ENCODE measurements at regions of chr1 and their contacts with region 1.

Region 1: DNA sequence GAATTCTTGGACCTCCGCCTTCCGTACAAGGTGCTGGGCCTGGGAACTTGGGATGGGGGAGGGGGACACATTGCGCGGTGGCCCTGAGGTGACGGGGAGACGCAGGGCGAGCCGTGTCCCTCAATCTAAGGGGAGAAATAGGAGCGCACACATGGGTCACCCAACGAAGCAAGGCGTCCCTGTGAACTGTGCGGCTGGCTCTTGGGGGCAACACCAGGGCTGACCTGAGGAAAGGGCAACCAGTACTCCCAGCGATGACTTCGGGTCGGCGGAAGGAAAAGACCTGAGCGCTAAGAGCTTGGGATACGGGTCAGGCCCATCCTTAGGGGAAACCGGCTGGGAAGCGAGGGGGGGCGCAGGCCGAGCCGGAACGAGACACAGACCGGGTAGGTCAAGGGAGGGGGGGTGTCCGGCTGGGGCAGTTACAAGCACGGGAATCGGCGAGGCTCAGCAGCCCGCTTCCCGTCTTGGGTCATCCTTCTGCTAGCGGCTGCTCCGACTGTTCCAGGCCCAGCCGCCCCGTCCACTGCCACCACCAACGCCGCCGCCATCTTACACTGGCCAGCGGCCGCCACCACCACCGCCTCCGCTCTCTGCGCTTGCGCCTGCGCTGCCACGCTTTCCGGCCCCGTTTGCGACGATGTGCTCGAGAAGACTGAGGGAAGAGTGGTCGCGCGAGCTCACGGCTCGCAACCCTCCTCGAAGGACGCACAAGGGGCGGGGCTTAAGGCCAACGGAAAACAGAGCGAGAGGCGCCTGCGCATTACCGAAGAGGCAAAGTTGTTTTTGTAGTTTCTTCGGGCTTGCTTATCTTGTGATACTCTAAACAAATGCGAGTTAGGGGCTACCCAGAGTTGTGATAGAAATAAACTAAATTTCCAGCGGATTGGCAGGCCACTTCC is at the start of gene DCAF8:
- DNase-seq: peak; percentile 99
- ATAC-seq: peak; percentile 88
- H3K4me3 Mint-ChIP-seq: peak within 1 kb of the TSS; percentile 100
- H3K27ac Mint-ChIP-seq: peak within 1 kb of the TSS; percentile 99
- H3K4me1 Mint-ChIP-seq: peaks cover 44% of the 10 kb centered on the region
- H3K27me3 Mint-ChIP-seq: no peaks in the 10 kb centered on the region
- total RNA-seq, gene DCAF8: 116 to 135 TPM

Region 2: DNA sequence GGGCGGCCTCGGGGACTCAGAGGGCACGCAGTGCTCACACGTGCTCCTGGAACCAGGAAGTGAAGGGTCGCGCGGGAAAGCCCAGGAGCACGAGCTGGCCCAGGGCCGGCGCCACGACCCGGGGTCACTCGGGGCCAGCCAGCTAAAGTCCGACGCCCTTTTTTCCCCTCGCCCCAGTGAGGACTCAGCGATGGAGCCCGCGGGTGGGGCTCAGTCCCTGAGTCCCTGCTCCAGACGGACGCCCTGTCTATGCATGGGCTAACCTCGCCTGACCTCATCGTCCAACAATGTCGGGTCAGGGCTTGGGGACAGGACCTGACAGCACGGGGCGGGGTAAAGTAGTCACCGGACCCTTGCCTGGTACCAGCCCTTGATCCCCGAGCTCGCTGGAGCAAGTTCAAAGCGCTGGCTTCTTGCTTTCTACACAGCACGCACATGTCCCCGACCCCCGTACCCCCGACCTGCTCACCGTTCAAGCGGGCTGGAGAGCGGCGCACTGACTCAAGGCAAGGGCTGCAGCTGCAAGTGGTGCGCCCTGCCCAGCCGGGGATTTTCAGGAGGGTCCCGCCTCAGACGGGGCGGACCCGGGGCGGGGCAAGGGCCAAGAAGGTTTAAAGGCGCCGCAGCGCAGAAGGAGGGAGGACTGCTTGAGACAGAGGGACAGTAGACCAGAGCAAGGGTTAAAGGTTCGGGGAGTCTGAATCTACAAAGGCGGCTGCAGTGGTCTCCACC is 337.0 kb before region 1 on chr1 and contains the start of gene TAGLN2:
- CTCF ChIA-PET with region 1: no interaction called
- POLR2A ChIA-PET with region 1: interaction called, 4 read pairs
- intact Hi-C with region 1: loop called in 1 of 2 experiments (anchors 1 kb)
- DNase-seq: peak; percentile 94
- ATAC-seq: peak; percentile 69
- H3K4me3 Mint-ChIP-seq: peak within 1 kb of the TSS; percentile 95
- H3K27ac Mint-ChIP-seq: peak within 1 kb of the TSS; percentile 98
- H3K4me1 Mint-ChIP-seq: peaks cover 38% of the 10 kb centered on the region
- H3K27me3 Mint-ChIP-seq: no peaks in the 10 kb centered on the region
- total RNA-seq, gene TAGLN2: 410 to 495 TPM

Region 3: GRCh38 chr1:160251687-160252526 is 10.2 kb before region 1 on chr1:
- CTCF ChIA-PET with region 1: interaction called, 39 read pairs
- POLR2A ChIA-PET with region 1: interaction called, 6 read pairs
- intact Hi-C with region 1: no loop called
- DNase-seq: peak; percentile 74
- ATAC-seq: peak; percentile 93
- H3K4me3 Mint-ChIP-seq: no peak overlapping the region
- H3K27ac Mint-ChIP-seq: no peak overlapping the region
- H3K4me1 Mint-ChIP-seq: peaks cover 14% of the 10 kb centered on the region
- H3K27me3 Mint-ChIP-seq: no peaks in the 10 kb centered on the region

Region 4: GRCh38 chr1:160342953-160343869 is 81.1 kb after region 1 on chr1 and contains the starts of genes COPA and NCSTN:
- CTCF ChIA-PET with region 1: no interaction called
- POLR2A ChIA-PET with region 1: no interaction called
- intact Hi-C with region 1: loop called in 1 of 2 experiments (anchors 1 kb)
- DNase-seq: peak; percentile 94
- ATAC-seq: peak; percentile 99
- H3K4me3 Mint-ChIP-seq: peak within 1 kb of the TSS; percentile 100
- H3K27ac Mint-ChIP-seq: peak within 1 kb of the TSS; percentile 100
- H3K4me1 Mint-ChIP-seq: peaks cover 31% of the 10 kb centered on the region
- H3K27me3 Mint-ChIP-seq: no peaks in the 10 kb centered on the region
- total RNA-seq, gene COPA: 125 to 148 TPM
- total RNA-seq, gene NCSTN: 47.0 to 51.5 TPM

Region 5: GRCh38 chr1:160618763-160619274 is 356.7 kb after region 1 on chr1:
- CTCF ChIA-PET with region 1: no interaction called
- POLR2A ChIA-PET with region 1: no interaction called
- intact Hi-C with region 1: loop called in 1 of 2 experiments (anchors 5 kb)
- DNase-seq: peak; percentile 65
- ATAC-seq: no peak
- H3K4me3 Mint-ChIP-seq: no peak overlapping the region
- H3K27ac Mint-ChIP-seq: peak overlapping the region; percentile 71
- H3K4me1 Mint-ChIP-seq: peaks cover 60% of the 10 kb centered on the region
- H3K27me3 Mint-ChIP-seq: no peaks in the 10 kb centered on the region

Measured in activated CD4-positive, alpha-beta T cell treated with anti-CD3 and anti-CD28 coated beads for 36 hours (primary cell).